K562 (cell line): ENCODE measurements at regions of chr11 and their contacts with region 1.

Region 1: DNA sequence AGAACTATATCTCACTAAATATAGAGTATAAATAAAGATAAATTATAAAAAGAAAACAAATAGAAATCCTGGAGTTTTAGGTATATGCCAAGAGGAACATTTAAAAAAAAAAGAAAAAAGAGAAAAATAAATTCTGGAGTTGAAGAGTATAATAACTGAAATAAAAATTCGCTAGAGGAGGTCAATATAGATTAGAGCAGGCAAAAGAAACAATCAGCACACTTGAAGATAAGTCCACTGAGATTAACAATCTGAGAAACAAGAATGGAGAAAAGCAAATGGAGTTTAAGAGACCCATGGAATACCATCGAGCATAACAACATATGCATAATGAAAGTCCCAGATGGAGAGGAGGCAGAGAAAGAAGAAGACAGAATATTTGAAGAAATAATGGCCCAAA is 14.3 kb upstream of the BEST1 start:
- DNase-seq: no peak
- ATAC-seq: no peak
- H3K4me3 ChIP-seq: no peak overlapping the region
- H3K27ac ChIP-seq: no peak overlapping the region
- H3K4me1 ChIP-seq: no peaks in the 10 kb centered on the region
- H3K27me3 ChIP-seq: no peaks in the 10 kb centered on the region
- CTCF ChIP-seq: no peak
- EP300 ChIP-seq: no peak
- POLR2A ChIP-seq: no peak
- RAD21 ChIP-seq: no peak

Region 2: GRCh38 chr11:61923166-61924063 is 12.4 kb before region 1 on chr11:
- CTCF ChIA-PET with region 1: no interaction called
- POLR2A ChIA-PET with region 1: interaction called, 10 read pairs
- in situ Hi-C with region 1: no loop called
- intact Hi-C with region 1: no loop called
- DNase-seq: peak; percentile 56 to 88 (median 65)
- ATAC-seq: peak; percentile 63
- H3K4me3 ChIP-seq: no peak overlapping the region
- H3K27ac ChIP-seq: peak overlapping the region; percentile 7; the same call in 1 of the 3 replicates
- H3K4me1 ChIP-seq: peaks cover 41 to 59% of the 10 kb centered on the region in 2 experiments
- H3K27me3 ChIP-seq: no peaks in the 10 kb centered on the region
- CTCF ChIP-seq: no peak
- EP300 ChIP-seq: no peak
- POLR2A ChIP-seq: no peak
- RAD21 ChIP-seq: no peak